Sigmoid colon (tissue), 7 donors: ENCODE measurements at regions of chr7 and their contacts with region 1.

Region 1: GRCh38 chr7:95723592-95724180 is 48.7 kb upstream of the DYNC1I1 start:
- DNase-seq: no peak
- H3K4me3 ChIP-seq: no peak overlapping the region
- H3K27ac ChIP-seq: no peak overlapping the region
- H3K4me1 ChIP-seq: no peaks in the 10 kb centered on the region
- H3K27me3 ChIP-seq: no peaks in the 10 kb centered on the region
- CTCF ChIP-seq: peak; percentile 26 to 57 (median 42)
- EP300 ChIP-seq: no peak
- POLR2A ChIP-seq: no peak

Region 2: GRCh38 chr7:95675016-95675415 is 48.7 kb before region 1 on chr7:
- intact Hi-C with region 1: no loop called
- DNase-seq: no peak
- H3K4me3 ChIP-seq: no peak overlapping the region
- H3K27ac ChIP-seq: no peak overlapping the region
- H3K4me1 ChIP-seq: peaks cover 0 to 10% (median 0%) of the 10 kb centered on the region in 4 donors
- H3K27me3 ChIP-seq: no peaks in the 10 kb centered on the region
- CTCF ChIP-seq: no peak
- EP300 ChIP-seq: no peak
- POLR2A ChIP-seq: no peak

Region 3: GRCh38 chr7:95690367-95690947 is 33.2 kb before region 1 on chr7:
- intact Hi-C with region 1: no loop called
- DNase-seq: no peak
- H3K4me3 ChIP-seq: no peak overlapping the region
- H3K27ac ChIP-seq: no peak overlapping the region
- H3K4me1 ChIP-seq: peaks cover 0 to 10% (median 2%) of the 10 kb centered on the region in 4 donors
- H3K27me3 ChIP-seq: no peaks in the 10 kb centered on the region
- CTCF ChIP-seq: peak; percentile 53 to 63 (median 60)
- EP300 ChIP-seq: no peak
- POLR2A ChIP-seq: no peak

Region 4: GRCh38 chr7:95772298-95772770 is 48.6 kb after region 1 on chr7 and contains the start of gene DYNC1I1:
- intact Hi-C with region 1: loop called (anchors 5 kb)
- DNase-seq: peak; percentile 88
- H3K4me3 ChIP-seq: peak within 1 kb of the TSS; percentile 71 to 92 (median 88)
- H3K27ac ChIP-seq: peak within 1 kb of the TSS; percentile 60 to 90 (median 88)
- H3K4me1 ChIP-seq: peaks cover 0 to 51% (median 28%) of the 10 kb centered on the region in 4 donors
- H3K27me3 ChIP-seq: no peaks in the 10 kb centered on the region
- CTCF ChIP-seq: no peak
- EP300 ChIP-seq: no peak
- POLR2A ChIP-seq: no peak
- total RNA-seq, gene DYNC1I1: 37.8 to 65.2 (median 56.6) TPM

Region 5: GRCh38 chr7:95871078-95871782 is 147.5 kb after region 1 on chr7:
- intact Hi-C with region 1: loop called (anchors 1 kb)
- DNase-seq: no peak
- H3K4me3 ChIP-seq: no peak overlapping the region
- H3K27ac ChIP-seq: no peak overlapping the region
- H3K4me1 ChIP-seq: peaks cover 0 to 9% (median 0%) of the 10 kb centered on the region in 4 donors
- H3K27me3 ChIP-seq: no peaks in the 10 kb centered on the region
- CTCF ChIP-seq: peak; percentile 41 to 57 (median 54)
- EP300 ChIP-seq: no peak
- POLR2A ChIP-seq: no peak